Psoas muscle (tissue), 8 donors: ENCODE measurements at regions of chr9 and their contacts with region 1.

Region 1: DNA sequence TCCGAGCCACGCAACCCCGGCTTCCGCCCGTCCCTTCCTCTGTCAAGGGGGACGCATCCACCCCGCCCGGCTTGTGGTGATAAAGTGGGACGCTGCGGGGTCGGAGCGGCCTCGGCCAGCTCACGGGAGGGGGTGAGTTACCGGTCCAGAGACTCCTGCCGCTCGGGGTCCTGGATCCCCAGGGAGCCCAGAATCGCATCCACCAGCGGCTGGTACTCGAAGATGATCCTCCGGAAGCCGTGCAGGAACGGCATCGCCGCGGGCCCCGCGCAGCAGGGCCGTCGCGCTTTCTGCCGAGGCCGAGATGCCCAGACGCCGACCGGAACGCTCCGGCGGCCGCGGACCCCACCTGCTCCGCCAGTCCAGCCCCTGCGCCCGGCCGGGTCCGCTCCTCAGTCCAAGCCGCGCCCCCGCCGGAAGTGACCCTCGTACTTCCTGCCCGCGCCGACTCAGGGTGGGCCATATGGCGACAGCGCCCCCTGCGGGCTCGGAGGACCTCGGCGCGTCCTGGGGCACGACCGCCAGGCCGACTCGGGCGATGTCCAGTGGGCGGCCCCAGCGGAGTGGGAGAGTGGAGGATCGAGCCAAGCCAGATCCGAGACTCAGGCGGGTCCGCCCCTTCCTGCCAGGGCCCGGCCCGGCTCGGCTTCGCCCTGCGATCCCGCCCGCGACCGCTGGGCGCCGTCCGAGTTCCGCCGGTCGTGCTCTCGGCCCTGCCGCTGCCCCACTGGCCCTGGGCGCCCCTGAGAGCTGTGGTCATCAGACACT is at the start of gene ASB6:
- DNase-seq: peak; percentile 99
- ATAC-seq: peak; percentile 89 to 95 (median 94)
- H3K4me3 ChIP-seq: peak within 1 kb of the TSS; percentile 97
- H3K27ac ChIP-seq: peak within 1 kb of the TSS; percentile 86
- H3K4me1 ChIP-seq: peaks cover 17% of the 10 kb centered on the region
- H3K27me3 ChIP-seq: no peaks in the 10 kb centered on the region
- CTCF ChIP-seq: peak; percentile 98
- total RNA-seq, gene ASB6: 6.3 to 11.9 (median 8.6) TPM

Region 2: DNA sequence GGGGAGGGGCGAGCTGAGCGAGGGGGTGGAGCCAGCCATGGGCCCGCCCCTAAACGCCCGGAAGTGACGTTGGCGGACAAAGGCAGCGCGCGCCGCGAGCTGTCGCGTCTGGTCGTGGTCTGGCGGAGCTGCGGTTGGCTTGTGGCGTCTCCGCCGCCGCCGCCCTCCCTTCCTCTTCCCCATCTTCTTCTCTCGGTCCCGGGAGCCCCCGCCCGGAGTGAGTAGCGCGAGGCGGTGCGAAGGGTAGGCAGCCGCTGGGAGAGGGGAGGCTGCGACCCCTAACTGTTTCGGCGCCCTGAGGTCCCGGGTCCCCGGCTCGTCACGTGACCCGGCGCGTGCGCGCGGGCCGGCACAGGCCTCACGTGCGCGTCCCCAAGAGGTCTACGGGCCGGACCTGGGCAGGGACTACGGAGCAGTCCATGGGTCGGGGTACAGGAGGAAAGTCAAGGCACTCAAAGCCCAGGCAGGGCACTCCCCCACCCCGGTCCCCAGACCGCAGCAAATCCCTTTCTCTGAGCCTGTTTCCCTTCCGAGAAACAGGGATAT is 15.8 kb before region 1 on chr9 and contains the start of gene NTMT1:
- intact Hi-C with region 1: loop called in 1 of 2 experiments (anchors 2 kb)
- DNase-seq: peak; percentile 87 to 94
- ATAC-seq: peak; percentile 94 to 96 (median 96)
- H3K4me3 ChIP-seq: peak within 1 kb of the TSS; percentile 76
- H3K27ac ChIP-seq: peak within 1 kb of the TSS; percentile 93
- H3K4me1 ChIP-seq: peaks cover 40% of the 10 kb centered on the region
- H3K27me3 ChIP-seq: peaks cover 0 to 9% (median 2%) of the 10 kb centered on the region in 3 donors
- CTCF ChIP-seq: no peak
- total RNA-seq, gene NTMT1: 67.5 to 98.2 (median 72.0) TPM

Region 3: GRCh38 chr9:129737479-129738274 is 95.7 kb after region 1 on chr9:
- intact Hi-C with region 1: loop called in 1 of 2 experiments (anchors 5 kb)
- DNase-seq: peak; percentile 85 to 90
- ATAC-seq: peak; percentile 88 to 98 (median 95)
- H3K4me3 ChIP-seq: peak overlapping the region; percentile 79
- H3K27ac ChIP-seq: peak overlapping the region; percentile 46
- H3K4me1 ChIP-seq: no peaks in the 10 kb centered on the region
- H3K27me3 ChIP-seq: peaks cover 0 to 14% (median 0%) of the 10 kb centered on the region in 3 donors
- CTCF ChIP-seq: peak; percentile 95